ENCODE measurements at regions of chr1 and their contacts with region 1.

Region 1: GRCh38 chr1:30911046-30911954 is 2.7 kb upstream of the SDC3 start:
- DNase-seq: peak; percentile 88
- H3K4me3 ChIP-seq: no peak overlapping the region; a peak in 1 of 4 replicates
- H3K27ac ChIP-seq: no peak overlapping the region
- H3K4me1 ChIP-seq: peaks cover 4 to 22% of the 10 kb centered on the region in 2 experiments; a peak in 2 of 4 replicates
- H3K27me3 ChIP-seq: no peaks in the 10 kb centered on the region
- CTCF ChIP-seq: peak; percentile 87
- EP300 ChIP-seq: no peak
- RAD21 ChIP-seq: peak; percentile 98

Region 2: DNA sequence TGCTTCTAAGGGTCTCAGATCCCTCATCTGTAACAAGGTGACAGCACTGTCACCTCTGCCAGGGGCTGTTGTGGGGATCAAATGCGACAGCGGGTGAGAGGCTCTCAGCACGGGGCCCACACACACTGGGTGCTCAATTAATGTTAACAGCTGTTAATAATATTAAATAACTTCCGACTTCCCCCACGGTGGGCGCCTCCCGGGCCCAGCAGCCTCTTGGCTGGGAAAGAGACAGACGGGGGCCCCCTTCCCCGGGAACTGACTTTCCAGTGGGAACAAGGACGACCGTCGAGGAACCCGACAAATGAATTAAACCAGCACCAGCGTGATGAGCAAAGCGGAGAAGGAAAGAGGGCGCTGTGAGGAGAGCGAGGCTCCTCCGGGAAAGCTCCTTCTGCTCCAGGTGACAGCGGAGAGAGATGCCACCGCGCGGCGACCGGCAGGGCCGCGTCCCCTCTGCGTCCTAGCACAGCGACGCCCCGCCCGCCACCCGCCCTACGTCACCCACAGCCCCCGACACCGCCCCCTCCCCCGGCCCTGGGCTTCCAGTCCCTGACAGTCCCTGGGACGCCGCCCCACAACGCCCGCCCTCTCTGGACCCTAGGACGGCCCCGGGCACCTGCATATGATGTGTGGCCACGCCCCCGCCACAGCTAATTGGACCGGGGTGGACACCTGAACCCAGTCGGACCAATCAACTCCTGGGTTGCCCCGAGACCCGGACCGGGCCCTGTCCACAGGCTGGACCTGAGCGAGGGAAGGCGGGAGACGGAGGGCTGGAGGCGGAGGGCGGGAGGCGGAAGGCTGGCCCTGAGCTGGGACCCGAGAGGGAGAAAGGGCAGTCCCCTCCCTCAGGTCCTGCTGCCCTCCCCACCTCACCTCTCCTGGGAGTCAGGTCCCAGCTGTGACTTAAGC is 226.2 kb before region 1 on chr1:
- CTCF ChIA-PET with region 1: no interaction called
- POLR2A ChIA-PET with region 1: no interaction called
- DNase-seq: peak; percentile 77
- H3K4me3 ChIP-seq: no peak overlapping the region
- H3K27ac ChIP-seq: no peak overlapping the region
- H3K4me1 ChIP-seq: peaks cover 0 to 14% of the 10 kb centered on the region in 2 experiments; a peak in 2 of 4 replicates
- H3K27me3 ChIP-seq: peaks cover 6% of the 10 kb centered on the region; the same call in 1 of the 2 replicates
- CTCF ChIP-seq: no peak
- EP300 ChIP-seq: no peak
- RAD21 ChIP-seq: no peak

Region 3: DNA sequence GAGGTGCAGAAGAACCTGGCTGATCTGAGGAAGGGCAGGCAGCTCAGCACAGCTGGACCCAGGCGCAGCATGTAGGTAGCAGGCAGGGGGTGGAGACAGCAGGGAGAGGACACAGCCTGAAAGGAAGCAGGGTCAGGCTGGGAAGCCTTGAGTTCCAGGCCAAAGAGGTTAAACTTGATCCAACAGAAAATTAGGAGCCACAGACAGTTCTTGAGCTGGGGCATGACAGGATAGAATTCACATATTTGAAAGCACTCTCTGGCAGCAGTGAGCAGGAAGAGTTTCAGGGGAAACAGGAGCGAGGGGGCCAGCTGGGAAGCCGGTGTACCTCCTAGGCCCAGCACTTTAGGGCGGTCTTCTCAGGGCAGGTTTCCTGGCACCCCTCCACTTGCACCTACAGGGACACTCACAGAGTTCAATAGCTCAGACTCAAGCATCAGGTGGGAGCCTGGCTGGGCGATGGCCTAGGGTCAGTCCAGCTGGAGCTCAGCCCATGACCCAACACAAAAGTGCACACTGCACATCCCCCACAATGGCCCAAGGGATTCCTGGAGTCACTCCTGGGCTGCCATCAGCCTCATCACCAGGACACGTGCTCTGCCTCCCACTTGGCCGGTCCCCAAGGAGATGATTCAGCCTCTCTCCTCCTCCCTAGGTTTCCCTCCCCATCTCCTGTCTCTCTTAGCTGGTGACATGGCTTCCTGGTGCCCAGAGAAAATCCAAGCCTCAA is 210.6 kb before region 1 on chr1:
- CTCF ChIA-PET with region 1: no interaction called
- POLR2A ChIA-PET with region 1: no interaction called
- DNase-seq: no peak
- H3K4me3 ChIP-seq: no peak overlapping the region
- H3K27ac ChIP-seq: no peak overlapping the region; a peak in 1 of 4 replicates
- H3K4me1 ChIP-seq: peaks cover 6 to 18% of the 10 kb centered on the region in 2 experiments; a peak in 2 of 4 replicates
- H3K27me3 ChIP-seq: no peaks in the 10 kb centered on the region
- CTCF ChIP-seq: no peak
- EP300 ChIP-seq: no peak
- RAD21 ChIP-seq: no peak

Region 4: GRCh38 chr1:30718636-30719405 is 192.5 kb before region 1 on chr1:
- CTCF ChIA-PET with region 1: interaction called, 93 read pairs
- POLR2A ChIA-PET with region 1: no interaction called
- DNase-seq: peak; percentile 93
- H3K4me3 ChIP-seq: peak overlapping the region; percentile 62 to 65
- H3K27ac ChIP-seq: peak overlapping the region; percentile 89 to 95
- H3K4me1 ChIP-seq: peaks cover 3 to 14% of the 10 kb centered on the region in 2 experiments; a peak in 2 of 4 replicates
- H3K27me3 ChIP-seq: no peaks in the 10 kb centered on the region
- CTCF ChIP-seq: peak; percentile 95
- EP300 ChIP-seq: no peak
- RAD21 ChIP-seq: no peak

Region 5: GRCh38 chr1:30779294-30780071 is 131.8 kb before region 1 on chr1:
- CTCF ChIA-PET with region 1: interaction called, 215 read pairs
- POLR2A ChIA-PET with region 1: no interaction called
- DNase-seq: peak; percentile 88
- H3K4me3 ChIP-seq: peak overlapping the region in 1 of 2 experiments; percentile 37; a peak in 1 of 4 replicates
- H3K27ac ChIP-seq: peak overlapping the region in 1 of 2 experiments; percentile 86; a peak in 2 of 4 replicates
- H3K4me1 ChIP-seq: peaks cover 0 to 20% of the 10 kb centered on the region in 2 experiments; a peak in 1 of 4 replicates
- H3K27me3 ChIP-seq: no peaks in the 10 kb centered on the region
- CTCF ChIP-seq: peak; percentile 92
- EP300 ChIP-seq: no peak
- RAD21 ChIP-seq: peak; percentile 89

Region 6: GRCh38 chr1:30840904-30841598 is 70.2 kb before region 1 on chr1:
- CTCF ChIA-PET with region 1: interaction called, 12 read pairs
- POLR2A ChIA-PET with region 1: no interaction called
- DNase-seq: no peak
- H3K4me3 ChIP-seq: no peak overlapping the region
- H3K27ac ChIP-seq: no peak overlapping the region
- H3K4me1 ChIP-seq: peaks cover 0 to 8% of the 10 kb centered on the region in 2 experiments; a peak in 1 of 4 replicates
- H3K27me3 ChIP-seq: no peaks in the 10 kb centered on the region
- CTCF ChIP-seq: no peak
- EP300 ChIP-seq: no peak
- RAD21 ChIP-seq: peak; percentile 15; the same call in 1 of the 2 replicates

Region 7: DNA sequence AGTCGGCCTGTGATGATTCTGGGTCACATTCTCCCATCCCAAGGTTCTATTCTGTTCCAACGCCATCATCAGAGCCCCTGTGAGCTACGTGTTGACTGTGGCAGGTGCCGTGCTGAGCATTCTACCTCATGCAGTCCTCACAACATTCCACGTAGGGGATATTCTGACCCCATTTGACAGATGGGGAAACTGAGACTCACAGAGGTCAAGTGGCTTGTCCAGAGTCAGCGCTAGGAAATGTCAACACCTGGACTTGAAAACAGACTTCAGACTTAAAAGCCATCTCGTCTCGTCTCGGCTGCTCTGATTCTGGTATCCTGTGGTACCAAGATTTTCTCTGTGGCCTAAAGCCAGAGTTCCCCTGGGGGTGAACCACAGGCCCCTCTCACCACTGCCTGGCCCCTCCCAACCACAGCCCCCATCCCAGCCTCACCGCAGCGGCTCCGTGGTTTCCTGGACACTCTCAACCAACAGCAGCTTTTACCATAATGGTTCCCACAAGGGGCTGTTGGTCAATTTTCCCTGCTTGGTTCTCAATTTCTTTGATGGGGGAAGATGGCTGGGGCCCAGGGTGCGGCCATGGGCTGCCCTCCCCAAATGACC is 42.4 kb before region 1 on chr1:
- CTCF ChIA-PET with region 1: interaction called, 14 read pairs
- POLR2A ChIA-PET with region 1: no interaction called
- DNase-seq: no peak
- H3K4me3 ChIP-seq: no peak overlapping the region
- H3K27ac ChIP-seq: no peak overlapping the region
- H3K4me1 ChIP-seq: no peaks in the 10 kb centered on the region
- H3K27me3 ChIP-seq: no peaks in the 10 kb centered on the region
- CTCF ChIP-seq: no peak
- EP300 ChIP-seq: no peak
- RAD21 ChIP-seq: no peak

Region 8: DNA sequence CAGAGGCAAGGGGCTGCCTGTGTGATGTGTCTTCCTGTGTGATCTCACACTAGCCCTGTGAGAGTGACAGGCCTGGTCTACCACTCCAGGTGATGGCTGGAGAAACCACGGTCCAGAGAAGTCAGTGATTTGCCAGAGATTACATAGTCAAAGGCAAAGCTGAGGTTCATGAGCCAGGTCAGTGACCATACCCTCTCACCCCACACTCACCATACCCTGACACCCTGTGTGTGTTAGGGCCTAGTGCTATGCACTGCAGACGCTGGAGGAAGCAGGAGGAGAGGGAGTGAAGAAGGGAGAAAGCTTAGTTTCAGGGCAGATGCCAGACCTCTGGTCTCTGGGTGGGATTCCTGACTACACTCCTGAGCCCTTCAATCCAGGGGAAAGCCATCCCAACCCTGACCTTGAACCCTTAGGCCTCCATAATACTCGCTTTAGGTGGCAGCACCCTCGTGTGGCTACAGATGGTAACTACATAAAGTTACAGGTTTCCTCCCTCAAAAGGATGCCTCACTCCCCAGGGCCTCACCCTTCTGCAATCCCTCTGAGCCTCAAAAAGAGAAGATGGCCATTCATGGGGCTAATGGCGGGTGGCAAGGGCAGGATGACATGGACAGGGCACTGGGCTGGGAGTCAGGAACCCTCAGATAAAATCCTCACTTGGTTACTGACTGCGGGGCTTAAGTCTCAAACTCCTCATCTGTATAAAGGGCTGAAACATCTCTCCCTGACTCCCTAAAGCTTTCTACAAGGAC is 18.0 kb after region 1 on chr1:
- CTCF ChIA-PET with region 1: interaction called, 112 read pairs
- POLR2A ChIA-PET with region 1: no interaction called
- DNase-seq: peak; percentile 70
- H3K4me3 ChIP-seq: peak overlapping the region in 1 of 2 experiments; percentile 32; a peak in 1 of 4 replicates
- H3K27ac ChIP-seq: peak overlapping the region in 1 of 2 experiments; percentile 31; a peak in 1 of 4 replicates
- H3K4me1 ChIP-seq: peaks cover 0 to 13% of the 10 kb centered on the region in 2 experiments; a peak in 1 of 4 replicates
- H3K27me3 ChIP-seq: no peaks in the 10 kb centered on the region
- CTCF ChIP-seq: peak; percentile 78
- EP300 ChIP-seq: no peak
- RAD21 ChIP-seq: peak; percentile 77

Region 9: GRCh38 chr1:31010086-31010989 is 99.0 kb after region 1 on chr1:
- CTCF ChIA-PET with region 1: no interaction called
- POLR2A ChIA-PET with region 1: no interaction called
- DNase-seq: no peak
- H3K4me3 ChIP-seq: no peak overlapping the region
- H3K27ac ChIP-seq: peak overlapping the region in 1 of 2 experiments; percentile 47; a peak in 2 of 4 replicates
- H3K4me1 ChIP-seq: peaks cover 44 to 51% of the 10 kb centered on the region in 2 experiments
- H3K27me3 ChIP-seq: no peaks in the 10 kb centered on the region
- CTCF ChIP-seq: no peak
- EP300 ChIP-seq: no peak
- RAD21 ChIP-seq: no peak